Activated CD4-positive, alpha-beta T cell treated with anti-CD3 and anti-CD28 coated beads, Interleukin-2, amount 10 ng/mL, durations not matched to agents 7 days and 5 days (primary cell): ENCODE measurements at regions of chr17 and their contacts with region 1.

Region 1: GRCh38 chr17:75131280-75132017 is at the start of gene NT5C:
- DNase-seq: peak; percentile 68
- H3K4me3 Mint-ChIP-seq: peak within 1 kb of the TSS; percentile 83
- H3K27ac Mint-ChIP-seq: peak within 1 kb of the TSS; percentile 89
- H3K4me1 Mint-ChIP-seq: peaks cover 30% of the 10 kb centered on the region
- H3K27me3 Mint-ChIP-seq: no peaks in the 10 kb centered on the region
- total RNA-seq, gene NT5C: 45.2 to 50.4 TPM

Region 2: DNA sequence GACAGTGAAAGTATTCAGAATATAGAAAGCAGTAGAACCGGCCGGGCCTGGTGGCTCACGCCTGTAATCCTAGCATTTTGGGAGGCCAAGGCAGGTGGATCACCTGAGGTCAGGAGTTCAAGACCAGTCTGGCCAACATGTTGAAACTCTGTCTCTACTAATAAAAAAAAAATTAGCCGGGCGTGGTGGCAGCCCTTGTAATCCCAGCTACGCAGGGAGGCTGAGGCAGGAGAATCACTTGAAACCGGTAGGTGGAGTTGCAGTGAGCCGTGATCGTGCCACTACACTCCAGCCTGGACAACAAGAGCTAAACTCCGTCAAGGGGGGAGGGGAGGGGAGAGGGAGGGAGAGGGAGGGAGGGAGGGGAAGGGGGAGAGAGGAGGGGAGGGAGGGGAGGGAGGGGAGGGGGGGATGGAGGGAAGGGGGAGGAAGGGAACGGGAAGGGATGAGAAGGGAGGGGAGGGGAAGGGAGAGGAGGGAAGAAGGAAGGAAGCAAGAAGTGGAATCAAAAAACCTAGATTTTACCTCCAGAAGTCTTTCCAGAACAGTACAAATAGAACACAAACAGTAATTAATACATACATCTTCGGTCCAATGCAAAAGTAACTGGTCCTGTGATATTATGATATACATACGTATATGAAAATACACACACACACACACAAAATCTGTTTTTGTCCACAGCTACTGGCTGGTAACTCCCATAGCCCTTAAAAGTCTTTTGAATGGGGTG is 11.0 kb after region 1 on chr17:
- CTCF ChIA-PET with region 1: interaction called, 11 read pairs
- POLR2A ChIA-PET with region 1: no interaction called
- DNase-seq: no peak
- H3K4me3 Mint-ChIP-seq: no peak overlapping the region
- H3K27ac Mint-ChIP-seq: no peak overlapping the region
- H3K4me1 Mint-ChIP-seq: peaks cover 27% of the 10 kb centered on the region
- H3K27me3 Mint-ChIP-seq: no peaks in the 10 kb centered on the region